ENCODE measurements at regions of chr17 and their contacts with region 1.

Region 1: DNA sequence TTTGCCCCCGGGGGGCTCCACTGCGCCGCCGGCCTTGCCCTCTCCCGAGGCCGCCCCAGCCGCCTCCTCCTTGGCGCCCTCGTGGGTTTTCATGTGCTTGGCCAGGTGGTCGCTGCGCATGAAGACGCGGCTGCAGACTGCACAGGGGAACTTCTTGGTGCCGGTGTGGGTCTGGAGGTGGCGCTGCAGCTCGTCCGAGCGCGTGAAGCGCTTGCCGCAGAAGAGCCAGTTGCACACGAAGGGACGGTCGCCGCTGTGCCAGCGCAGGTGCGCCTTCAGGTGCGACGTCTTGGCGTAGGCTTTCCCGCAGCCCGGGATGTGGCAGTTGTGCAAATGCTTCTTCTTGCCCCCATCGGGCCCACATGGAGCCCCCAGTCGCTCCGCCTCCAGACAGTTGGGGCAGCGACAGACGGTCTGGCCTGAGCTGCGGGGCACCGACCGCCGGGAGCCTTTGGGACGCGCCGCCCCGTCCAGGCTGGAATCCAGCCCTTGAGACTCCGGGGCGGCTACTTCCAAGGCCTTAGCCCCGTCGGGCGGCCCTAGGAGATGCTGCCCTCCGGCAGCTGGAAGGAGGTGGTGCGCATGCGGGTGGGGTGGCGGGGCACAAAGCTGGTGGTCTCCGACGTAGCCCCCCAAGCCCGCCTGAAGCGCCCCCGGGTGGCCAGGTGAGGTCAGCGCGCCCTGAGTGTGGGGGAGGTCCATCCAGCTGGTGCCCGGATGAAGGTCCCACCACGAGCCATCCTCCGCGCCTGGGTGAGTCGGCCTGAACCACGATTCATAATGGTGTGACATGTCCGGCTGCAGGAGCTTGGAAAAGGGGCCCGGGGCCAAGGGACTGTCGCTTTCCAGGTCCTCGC is 3.4 kb downstream of the SP6 start:
- DNase-seq: no peak
- H3K4me3 ChIP-seq: no peak overlapping the region
- H3K27ac ChIP-seq: no peak overlapping the region
- H3K4me1 ChIP-seq: peaks cover 2% of the 10 kb centered on the region
- H3K27me3 ChIP-seq: no peaks in the 10 kb centered on the region
- CTCF ChIP-seq: no peak
- EP300 ChIP-seq: no peak
- POLR2A ChIP-seq: no peak

Region 2: DNA sequence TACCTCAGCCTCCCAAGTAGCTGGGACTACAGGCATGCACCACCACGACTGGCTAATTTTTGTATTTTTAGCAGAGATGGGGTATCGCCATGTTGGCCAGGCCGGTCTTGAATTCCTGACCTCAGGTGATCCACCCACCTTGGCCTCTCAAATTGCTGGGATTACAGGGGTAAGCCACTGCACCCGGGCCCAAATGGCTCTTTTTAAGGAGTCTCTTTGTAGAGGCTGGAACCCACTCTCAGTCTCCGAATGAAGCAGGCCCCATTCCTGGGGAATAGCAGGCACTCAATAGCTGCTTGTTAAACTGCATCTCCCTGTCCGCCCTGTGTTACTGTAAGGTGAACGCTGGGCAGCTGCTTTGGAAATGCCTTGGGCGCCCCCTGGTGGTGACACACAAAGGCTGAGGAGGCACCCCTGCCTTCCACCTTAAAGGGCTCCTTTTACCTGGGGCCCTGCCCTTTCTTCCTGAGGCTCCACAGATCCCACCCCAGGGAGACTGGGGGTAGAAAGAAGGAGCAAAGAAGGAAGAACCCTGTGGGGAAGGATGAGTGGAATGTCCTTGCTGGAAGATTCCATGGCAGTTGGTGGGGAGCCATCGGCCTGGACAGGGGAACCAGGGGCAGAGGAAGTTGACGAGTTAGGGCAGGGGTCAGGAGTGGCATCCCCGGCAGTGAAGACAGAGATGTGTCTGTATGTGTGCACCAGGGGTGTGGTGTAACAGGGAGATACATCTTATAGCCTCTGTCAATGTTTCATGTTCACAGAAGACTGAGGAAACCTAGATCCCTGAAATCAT is 42.4 kb after region 1 on chr17:
- intact Hi-C with region 1: loop called in 2 of 4 experiments (anchors 1 to 2 kb)
- DNase-seq: peak; percentile 84 to 92 (median 90)
- H3K4me3 ChIP-seq: no peak overlapping the region
- H3K27ac ChIP-seq: no peak overlapping the region
- H3K4me1 ChIP-seq: no peaks in the 10 kb centered on the region
- H3K27me3 ChIP-seq: no peaks in the 10 kb centered on the region
- CTCF ChIP-seq: peak; percentile 86 to 94 (median 89)
- EP300 ChIP-seq: no peak
- POLR2A ChIP-seq: no peak

Region 3: DNA sequence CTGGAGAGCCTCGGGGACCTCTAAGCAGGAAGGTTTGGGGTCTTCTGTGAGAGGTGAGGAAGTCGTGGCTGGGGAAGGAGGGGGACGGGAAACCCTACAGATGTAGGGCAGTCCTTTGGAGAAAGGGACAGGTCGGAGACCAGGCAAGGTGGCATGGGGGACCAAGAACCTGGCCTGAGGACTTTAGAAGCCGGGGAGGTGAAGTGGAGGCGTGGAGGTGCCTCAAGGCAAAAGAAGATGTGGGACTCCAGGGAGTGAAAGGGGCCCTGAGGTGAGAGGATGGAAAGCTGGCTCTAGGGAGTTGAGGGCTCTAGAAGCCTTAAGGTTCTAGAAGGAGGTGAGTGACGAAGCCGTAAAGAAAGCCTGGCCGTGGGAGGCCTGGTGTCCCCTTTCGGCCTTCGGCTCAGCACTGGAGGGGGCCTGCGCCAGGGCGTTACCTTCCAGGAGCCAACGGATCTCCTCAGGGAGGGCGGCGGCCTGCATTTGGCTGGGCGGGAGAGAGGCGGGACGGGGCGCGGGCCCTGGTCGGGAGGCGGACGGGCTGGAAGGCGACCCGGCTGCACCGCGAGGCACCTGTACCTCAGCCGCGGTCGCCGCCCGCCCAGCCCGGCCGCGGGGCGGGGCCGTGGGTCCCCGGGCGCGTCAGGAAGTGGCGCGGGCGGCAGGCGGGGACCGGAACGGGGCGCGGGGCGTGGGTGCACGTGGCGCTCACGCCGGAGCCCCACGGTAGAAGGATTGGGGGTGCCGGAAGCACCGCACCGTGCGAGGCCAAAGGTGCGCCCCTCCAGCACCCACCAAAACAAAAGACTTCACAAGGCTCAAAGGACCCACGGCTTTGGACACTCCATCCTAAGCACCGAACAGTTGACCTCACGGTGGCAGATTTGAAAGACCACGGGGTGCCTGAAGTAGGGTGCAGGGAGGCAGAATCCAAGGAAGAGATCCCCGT is 582.3 kb after region 1 on chr17 and contains the start of gene SKAP1:
- intact Hi-C with region 1: no loop called
- DNase-seq: no peak
- H3K4me3 ChIP-seq: no peak within 1 kb of the TSS
- H3K27ac ChIP-seq: no peak within 1 kb of the TSS
- H3K4me1 ChIP-seq: no peaks in the 10 kb centered on the region
- H3K27me3 ChIP-seq: no peaks in the 10 kb centered on the region
- CTCF ChIP-seq: no peak
- EP300 ChIP-seq: no peak
- POLR2A ChIP-seq: no peak
- total RNA-seq, gene SKAP1: 0.30 to 6.0 (median 2.4) TPM in 6 of 7 donors, not detected in the other